B cell (primary cell): ENCODE measurements at regions of chr5 and their contacts with region 1.

Region 1: DNA sequence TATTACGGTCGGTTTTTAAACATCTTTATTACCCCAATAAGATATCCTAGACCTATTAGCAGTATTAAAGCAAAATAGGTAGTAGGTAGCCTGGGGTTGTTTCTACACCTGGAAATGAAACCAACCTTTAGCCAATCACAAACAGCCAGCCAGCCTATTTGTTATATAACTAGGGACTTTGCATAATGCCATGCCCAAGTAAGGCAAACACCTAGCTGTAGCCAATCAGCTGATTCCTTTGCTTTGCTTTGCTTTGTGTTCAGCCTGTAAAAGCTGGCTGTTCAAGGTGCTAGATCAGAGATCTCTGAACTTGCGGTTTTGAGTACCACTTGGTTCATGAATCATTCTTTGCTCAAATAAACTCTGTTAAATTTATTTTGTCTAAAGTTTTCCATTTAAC is 46.5 kb upstream of the SETD9 start:
- DNase-seq: no peak
- ATAC-seq: no peak
- H3K4me3 ChIP-seq: no peak overlapping the region
- H3K4me3 Mint-ChIP-seq: no peak overlapping the region
- H3K27ac ChIP-seq: peak overlapping the region in 1 of 2 donors; percentile 11
- H3K27ac Mint-ChIP-seq: no peak overlapping the region
- H3K4me1 ChIP-seq: peaks cover 0 to 3% of the 10 kb centered on the region in 2 donors
- H3K4me1 Mint-ChIP-seq: peaks cover 18% of the 10 kb centered on the region
- H3K27me3 ChIP-seq: no peaks in the 10 kb centered on the region
- H3K27me3 Mint-ChIP-seq: no peaks in the 10 kb centered on the region
- CTCF ChIP-seq: no peak

Region 2: GRCh38 chr5:56565644-56566043 is 297.3 kb before region 1 on chr5:
- CTCF ChIA-PET with region 1: no interaction called
- POLR2A ChIA-PET with region 1: no interaction called
- intact Hi-C with region 1: no loop called
- DNase-seq: peak; percentile 82
- ATAC-seq: peak; percentile 97
- H3K4me3 ChIP-seq: peak overlapping the region in 3 of 5 experiments; percentile 6 to 20 (median 9)
- H3K4me3 Mint-ChIP-seq: peak overlapping the region; percentile 56
- H3K27ac ChIP-seq: no peak overlapping the region
- H3K27ac Mint-ChIP-seq: peak overlapping the region; percentile 69
- H3K4me1 ChIP-seq: peaks cover 34 to 35% of the 10 kb centered on the region in 2 donors
- H3K4me1 Mint-ChIP-seq: peaks cover 41% of the 10 kb centered on the region
- H3K27me3 ChIP-seq: no peaks in the 10 kb centered on the region
- H3K27me3 Mint-ChIP-seq: no peaks in the 10 kb centered on the region
- CTCF ChIP-seq: no peak

Region 3: DNA sequence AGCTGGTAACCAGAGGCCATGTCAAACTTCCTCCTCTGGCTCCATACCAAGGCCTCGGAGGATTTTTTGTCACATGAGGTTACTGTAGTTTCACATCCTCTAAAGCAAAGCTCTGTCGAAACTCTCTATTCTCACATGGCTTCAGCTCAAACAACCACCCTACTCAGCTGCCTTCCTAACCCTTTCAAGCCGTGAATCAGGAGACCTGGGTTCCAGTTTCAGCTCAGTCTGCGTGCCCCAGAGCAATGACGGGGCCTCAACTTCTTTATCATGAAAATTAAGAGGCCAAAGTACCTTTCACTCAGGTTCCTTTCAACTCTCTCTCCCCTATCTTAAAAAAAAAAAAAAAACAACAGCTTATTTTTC is 192.8 kb before region 1 on chr5:
- CTCF ChIA-PET with region 1: no interaction called
- POLR2A ChIA-PET with region 1: no interaction called
- intact Hi-C with region 1: no loop called
- DNase-seq: peak; percentile 95
- ATAC-seq: no peak
- H3K4me3 ChIP-seq: no peak overlapping the region
- H3K4me3 Mint-ChIP-seq: peak overlapping the region; percentile 75
- H3K27ac ChIP-seq: peak overlapping the region; percentile 97 to 98
- H3K27ac Mint-ChIP-seq: peak overlapping the region; percentile 97
- H3K4me1 ChIP-seq: peaks cover 58% of the 10 kb centered on the region in 2 donors
- H3K4me1 Mint-ChIP-seq: peaks cover 74% of the 10 kb centered on the region
- H3K27me3 ChIP-seq: no peaks in the 10 kb centered on the region
- H3K27me3 Mint-ChIP-seq: no peaks in the 10 kb centered on the region
- CTCF ChIP-seq: no peak

Region 4: DNA sequence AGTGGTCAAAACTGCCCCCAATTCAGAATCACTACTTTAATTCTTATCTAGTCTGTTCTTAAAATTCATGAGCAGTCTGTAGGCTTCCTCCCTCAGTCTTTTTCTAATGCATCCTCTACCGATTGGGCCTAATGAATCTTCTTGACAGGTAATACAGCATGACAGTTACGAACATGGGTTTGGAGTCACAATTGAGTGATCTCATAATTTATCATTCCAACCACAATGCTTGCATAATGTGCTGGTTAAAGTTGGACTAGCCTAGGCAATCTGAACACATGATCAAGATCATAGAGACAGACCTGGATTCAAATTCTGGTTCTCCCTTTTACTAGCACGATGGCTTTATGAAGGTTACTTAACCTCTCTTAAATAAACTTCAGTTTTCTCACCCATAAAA is 13.4 kb after region 1 on chr5:
- CTCF ChIA-PET with region 1: interaction called, 9 read pairs
- POLR2A ChIA-PET with region 1: interaction called, 14 read pairs
- intact Hi-C with region 1: loop called (anchors 2 kb)
- DNase-seq: no peak
- ATAC-seq: no peak
- H3K4me3 ChIP-seq: no peak overlapping the region
- H3K4me3 Mint-ChIP-seq: no peak overlapping the region
- H3K27ac ChIP-seq: peak overlapping the region in 1 of 2 donors; percentile 39
- H3K27ac Mint-ChIP-seq: no peak overlapping the region
- H3K4me1 ChIP-seq: peaks cover 10 to 20% of the 10 kb centered on the region in 2 donors
- H3K4me1 Mint-ChIP-seq: peaks cover 25% of the 10 kb centered on the region
- H3K27me3 ChIP-seq: no peaks in the 10 kb centered on the region
- H3K27me3 Mint-ChIP-seq: no peaks in the 10 kb centered on the region
- CTCF ChIP-seq: no peak

Region 5: DNA sequence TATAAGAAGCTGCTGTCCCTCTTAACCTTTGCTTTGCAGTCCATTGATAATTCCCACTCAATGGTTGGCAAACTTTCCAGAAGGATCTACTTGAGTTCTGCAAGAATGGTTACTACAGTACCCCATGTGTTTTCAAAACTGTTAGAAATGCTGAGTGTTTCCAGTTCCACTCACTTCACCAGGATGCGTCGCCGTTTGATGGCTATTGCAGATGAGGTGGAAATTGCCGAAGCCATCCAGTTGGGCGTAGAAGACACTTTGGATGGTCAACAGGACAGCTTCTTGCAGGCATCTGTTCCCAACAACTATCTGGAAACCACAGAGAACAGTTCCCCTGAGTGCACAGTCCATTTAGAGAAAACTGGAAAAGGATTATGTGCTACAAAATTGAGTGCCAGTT is 18.7 kb after region 1 on chr5:
- CTCF ChIA-PET with region 1: interaction called, 3 read pairs
- POLR2A ChIA-PET with region 1: no interaction called
- intact Hi-C with region 1: loop called (anchors 2 kb)
- DNase-seq: no peak
- ATAC-seq: no peak
- H3K4me3 ChIP-seq: no peak overlapping the region
- H3K4me3 Mint-ChIP-seq: no peak overlapping the region
- H3K27ac ChIP-seq: no peak overlapping the region
- H3K27ac Mint-ChIP-seq: no peak overlapping the region
- H3K4me1 ChIP-seq: no peaks in the 10 kb centered on the region
- H3K4me1 Mint-ChIP-seq: no peaks in the 10 kb centered on the region
- H3K27me3 ChIP-seq: no peaks in the 10 kb centered on the region
- H3K27me3 Mint-ChIP-seq: no peaks in the 10 kb centered on the region
- CTCF ChIP-seq: no peak